Esophagus squamous epithelium (tissue), 5 donors: ENCODE measurements at regions of chr12 and their contacts with region 1.

Region 1: GRCh38 chr12:68675101-68675842 is 11.5 kb upstream of the NUP107 start:
- DNase-seq: no peak
- H3K4me3 ChIP-seq: no peak overlapping the region
- H3K27ac ChIP-seq: peak overlapping the region in 3 of 4 donors; percentile 5 to 35 (median 9)
- H3K4me1 ChIP-seq: peaks cover 0 to 21% (median 10%) of the 10 kb centered on the region in 3 donors
- H3K27me3 ChIP-seq: no peaks in the 10 kb centered on the region
- CTCF ChIP-seq: no peak
- POLR2A ChIP-seq: peak in 1 of 4 donors; percentile 16

Region 2: GRCh38 chr12:68358532-68359485 is 316.5 kb before region 1 on chr12:
- intact Hi-C with region 1: loop called (anchors 10 kb)
- DNase-seq: no peak
- H3K4me3 ChIP-seq: no peak overlapping the region
- H3K27ac ChIP-seq: peak overlapping the region in 1 of 4 donors; percentile 59
- H3K4me1 ChIP-seq: peaks cover 0 to 12% (median 8%) of the 10 kb centered on the region in 3 donors
- H3K27me3 ChIP-seq: no peaks in the 10 kb centered on the region
- CTCF ChIP-seq: peak; percentile 54 to 81 (median 74)
- POLR2A ChIP-seq: no peak

Region 3: DNA sequence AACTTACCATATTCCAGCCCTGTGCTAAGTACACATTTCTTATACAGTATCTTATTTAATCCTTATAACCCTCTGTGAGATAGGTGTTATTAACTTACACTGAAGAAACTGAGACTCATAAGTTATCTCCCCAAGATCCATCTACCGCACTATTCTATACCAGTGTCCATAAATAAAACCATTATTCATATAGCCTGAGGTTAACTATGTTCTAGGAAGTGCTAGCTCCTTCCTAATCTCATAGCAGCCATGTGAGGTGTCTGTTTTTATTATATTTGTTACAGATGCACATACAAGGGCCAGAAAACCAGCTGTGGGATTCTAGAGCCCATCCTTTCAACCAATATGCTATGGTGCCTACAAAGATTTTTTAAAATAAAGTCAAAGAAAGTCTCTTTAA is 164.9 kb before region 1 on chr12:
- intact Hi-C with region 1: no loop called
- DNase-seq: no peak
- H3K4me3 ChIP-seq: no peak overlapping the region
- H3K27ac ChIP-seq: no peak overlapping the region
- H3K4me1 ChIP-seq: no peaks in the 10 kb centered on the region
- H3K27me3 ChIP-seq: peaks cover 0 to 7% (median 0%) of the 10 kb centered on the region in 4 donors
- CTCF ChIP-seq: no peak
- POLR2A ChIP-seq: no peak